Activated CD4-positive, alpha-beta T cell treated with anti-CD3 and anti-CD28 coated beads for 36 hours (primary cell): ENCODE measurements at regions of chr2 and their contacts with region 1.

Region 1: GRCh38 chr2:78701546-78701945 is 324.0 kb upstream of the REG3G start:
- DNase-seq: no peak
- ATAC-seq: no peak
- H3K4me3 Mint-ChIP-seq: no peak overlapping the region
- H3K27ac Mint-ChIP-seq: no peak overlapping the region
- H3K4me1 Mint-ChIP-seq: no peaks in the 10 kb centered on the region
- H3K27me3 Mint-ChIP-seq: no peaks in the 10 kb centered on the region

Region 2: GRCh38 chr2:78301166-78301789 is 400.3 kb before region 1 on chr2:
- CTCF ChIA-PET with region 1: no interaction called
- POLR2A ChIA-PET with region 1: no interaction called
- intact Hi-C with region 1: no loop called
- DNase-seq: no peak
- ATAC-seq: no peak
- H3K4me3 Mint-ChIP-seq: no peak overlapping the region
- H3K27ac Mint-ChIP-seq: no peak overlapping the region
- H3K4me1 Mint-ChIP-seq: no peaks in the 10 kb centered on the region
- H3K27me3 Mint-ChIP-seq: no peaks in the 10 kb centered on the region

Region 3: GRCh38 chr2:78780256-78780655 is 78.7 kb after region 1 on chr2:
- CTCF ChIA-PET with region 1: no interaction called
- POLR2A ChIA-PET with region 1: interaction called, 10 read pairs
- intact Hi-C with region 1: no loop called
- DNase-seq: no peak
- ATAC-seq: no peak
- H3K4me3 Mint-ChIP-seq: no peak overlapping the region
- H3K27ac Mint-ChIP-seq: no peak overlapping the region
- H3K4me1 Mint-ChIP-seq: no peaks in the 10 kb centered on the region
- H3K27me3 Mint-ChIP-seq: no peaks in the 10 kb centered on the region